ENCODE measurements at regions of chr2 and their contacts with region 1.

Region 1: DNA sequence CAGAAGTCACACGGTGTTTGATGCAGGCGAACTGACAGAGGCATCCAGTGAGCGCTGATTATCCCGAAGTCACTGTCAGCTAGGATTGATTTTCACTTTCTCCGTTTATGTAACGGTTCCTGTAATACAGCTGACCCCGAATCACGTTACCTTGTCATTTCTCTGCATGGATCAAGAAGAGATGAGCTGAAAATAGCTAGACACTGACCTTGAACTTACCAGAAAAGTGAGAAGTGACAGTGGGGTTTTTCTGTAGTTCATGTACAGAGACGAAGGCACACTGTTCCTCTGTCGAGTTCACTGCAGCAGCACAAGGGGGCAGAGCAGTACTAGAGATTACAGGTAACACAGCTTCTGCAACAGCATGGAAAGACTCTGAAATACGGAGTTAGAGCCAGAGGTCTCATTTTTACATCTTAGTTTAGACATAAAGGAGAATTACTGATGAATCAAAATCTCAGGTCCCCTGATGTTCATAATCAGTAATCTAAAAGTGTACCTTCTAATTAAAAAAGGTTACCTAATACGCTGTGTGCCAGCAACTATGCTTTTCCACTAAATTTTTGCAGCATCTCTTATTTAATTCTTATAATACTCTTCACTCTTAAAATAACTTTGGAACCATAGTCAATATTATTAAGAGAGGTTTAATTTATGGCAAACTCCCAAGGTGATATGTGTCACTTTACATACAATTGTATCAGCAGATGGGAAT is 33.1 kb downstream of the ARHGAP15 start:
- DNase-seq: no peak
- H3K4me3 ChIP-seq: no peak overlapping the region
- H3K27ac ChIP-seq: no peak overlapping the region
- H3K4me1 ChIP-seq: no peaks in the 10 kb centered on the region
- H3K27me3 ChIP-seq: no peaks in the 10 kb centered on the region
- CTCF ChIP-seq: peak in 2 of 3 experiments; percentile 16 to 58
- POLR2A ChIP-seq: no peak

Region 2: GRCh38 chr2:141207036-141207385 is 1955.3 kb before region 1 on chr2:
- intact Hi-C with region 1: loop called (anchors 10 kb)
- DNase-seq: no peak
- H3K4me3 ChIP-seq: no peak overlapping the region
- H3K27ac ChIP-seq: no peak overlapping the region
- H3K4me1 ChIP-seq: no peaks in the 10 kb centered on the region
- H3K27me3 ChIP-seq: no peaks in the 10 kb centered on the region
- CTCF ChIP-seq: no peak
- POLR2A ChIP-seq: no peak

Region 3: DNA sequence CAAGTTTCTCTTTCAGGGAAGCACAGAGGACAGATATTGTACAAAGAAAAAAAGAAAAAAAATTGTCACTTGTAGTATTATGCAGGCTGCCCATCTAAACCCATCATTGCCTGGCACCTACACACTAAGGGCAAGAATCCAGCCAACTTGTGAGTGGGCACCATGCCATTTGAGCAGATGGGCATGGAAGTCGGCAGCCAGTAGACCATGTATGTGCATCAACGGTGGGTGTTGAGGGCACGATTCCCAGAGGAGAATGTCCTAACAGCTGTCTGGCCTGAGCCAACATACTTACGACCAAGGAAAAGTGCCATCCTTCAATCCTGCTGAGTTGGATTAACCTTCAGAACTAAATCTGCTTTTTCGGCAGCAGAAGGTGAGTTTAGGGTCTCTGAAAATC is 30.8 kb after region 1 on chr2:
- intact Hi-C with region 1: no loop called
- DNase-seq: no peak
- H3K4me3 ChIP-seq: no peak overlapping the region
- H3K27ac ChIP-seq: no peak overlapping the region
- H3K4me1 ChIP-seq: no peaks in the 10 kb centered on the region
- H3K27me3 ChIP-seq: no peaks in the 10 kb centered on the region
- CTCF ChIP-seq: no peak
- POLR2A ChIP-seq: no peak